CD4-positive, alpha-beta T cell (primary cell): ENCODE measurements at regions of chr9 and their contacts with region 1.

Region 1: GRCh38 chr9:15211160-15211814 is 95.7 kb downstream of the TTC39B start:
- DNase-seq: peak in 13 of 14 experiments; percentile 10 to 78 (median 44)
- ATAC-seq: peak; percentile 63
- H3K4me3 ChIP-seq: no peak overlapping the region
- H3K4me3 Mint-ChIP-seq: no peak overlapping the region
- H3K27ac ChIP-seq: no peak overlapping the region
- H3K27ac Mint-ChIP-seq: peak overlapping the region; percentile 31
- H3K4me1 ChIP-seq: no peaks in the 10 kb centered on the region
- H3K4me1 Mint-ChIP-seq: peaks cover 6% of the 10 kb centered on the region
- H3K27me3 ChIP-seq: no peaks in the 10 kb centered on the region
- H3K27me3 Mint-ChIP-seq: no peaks in the 10 kb centered on the region
- CTCF ChIP-seq: peak; percentile 95

Region 2: DNA sequence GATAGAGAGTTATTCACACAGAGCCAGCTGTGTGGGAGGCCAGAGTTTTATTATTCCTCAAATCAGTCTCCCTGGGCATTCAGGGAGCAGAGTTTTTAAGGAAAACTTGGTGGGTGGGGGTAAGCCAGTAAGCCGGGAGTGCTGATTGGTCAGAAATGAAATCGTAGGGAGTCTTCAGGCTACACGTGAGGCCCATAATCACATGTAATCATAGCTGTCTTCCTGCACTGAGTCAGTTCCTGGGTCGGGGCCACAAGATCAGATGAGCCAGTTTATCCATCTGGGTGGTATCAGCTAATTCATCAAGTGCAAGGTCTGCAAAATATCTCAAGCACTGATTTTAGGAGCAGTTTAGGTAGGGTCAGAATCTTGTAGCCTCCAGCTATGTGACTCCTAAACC is 106.5 kb after region 1 on chr9:
- CTCF ChIA-PET with region 1: no interaction called
- POLR2A ChIA-PET with region 1: no interaction called
- intact Hi-C with region 1: loop called in 1 of 2 experiments (anchors 1 kb)
- DNase-seq: no peak
- ATAC-seq: no peak
- H3K4me3 ChIP-seq: no peak overlapping the region
- H3K4me3 Mint-ChIP-seq: no peak overlapping the region
- H3K27ac ChIP-seq: no peak overlapping the region
- H3K27ac Mint-ChIP-seq: no peak overlapping the region
- H3K4me1 ChIP-seq: no peaks in the 10 kb centered on the region
- H3K4me1 Mint-ChIP-seq: no peaks in the 10 kb centered on the region
- H3K27me3 ChIP-seq: no peaks in the 10 kb centered on the region
- H3K27me3 Mint-ChIP-seq: no peaks in the 10 kb centered on the region
- CTCF ChIP-seq: no peak

Region 3: DNA sequence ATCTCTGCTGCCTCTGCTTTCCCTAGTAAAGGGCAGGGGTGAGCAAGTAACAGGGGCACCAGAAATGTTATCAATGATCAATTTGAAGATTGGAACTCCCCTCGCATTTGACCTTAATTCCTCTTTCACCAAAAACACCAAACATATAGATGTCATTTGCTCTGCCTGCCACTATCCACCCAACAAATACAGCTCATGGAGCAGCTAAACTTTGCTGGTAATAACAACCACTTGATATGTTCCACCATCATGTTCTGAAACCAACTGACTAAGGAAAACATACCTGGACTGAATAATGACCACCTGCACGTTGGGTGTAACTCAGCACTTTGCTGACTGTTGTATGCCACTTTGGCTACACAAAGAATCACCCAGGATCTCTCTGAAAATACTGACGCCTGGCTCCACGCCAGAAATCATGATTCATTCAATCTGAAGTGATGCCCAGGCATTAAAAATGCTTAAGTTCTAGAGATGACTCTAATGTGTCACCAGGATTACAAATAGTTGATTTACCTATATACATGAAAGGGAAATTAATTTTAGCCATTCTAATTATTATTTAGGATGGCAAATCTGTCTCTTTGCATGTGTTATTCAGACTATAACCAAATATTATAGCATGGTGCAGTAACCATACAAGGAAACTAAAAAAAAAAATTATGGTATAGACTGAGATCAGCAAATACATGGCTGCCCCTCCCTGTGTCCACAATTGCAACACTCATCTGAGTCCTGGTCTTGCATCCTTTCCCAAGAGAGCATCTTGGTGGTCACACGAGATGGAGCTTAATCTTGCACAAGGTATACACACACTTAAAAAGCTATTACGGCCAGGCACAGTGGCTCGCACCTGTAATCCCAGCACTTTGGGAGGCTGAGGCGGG is 138.8 kb after region 1 on chr9:
- CTCF ChIA-PET with region 1: no interaction called
- POLR2A ChIA-PET with region 1: no interaction called
- intact Hi-C with region 1: loop called in 1 of 2 experiments (anchors 5 kb)
- DNase-seq: peak in 6 of 14 experiments; percentile 18 to 55 (median 23)
- ATAC-seq: no peak
- H3K4me3 ChIP-seq: no peak overlapping the region
- H3K4me3 Mint-ChIP-seq: no peak overlapping the region
- H3K27ac ChIP-seq: no peak overlapping the region
- H3K27ac Mint-ChIP-seq: no peak overlapping the region
- H3K4me1 ChIP-seq: peaks cover 11% of the 10 kb centered on the region
- H3K4me1 Mint-ChIP-seq: peaks cover 16% of the 10 kb centered on the region
- H3K27me3 ChIP-seq: no peaks in the 10 kb centered on the region
- H3K27me3 Mint-ChIP-seq: no peaks in the 10 kb centered on the region
- CTCF ChIP-seq: no peak

Region 4: DNA sequence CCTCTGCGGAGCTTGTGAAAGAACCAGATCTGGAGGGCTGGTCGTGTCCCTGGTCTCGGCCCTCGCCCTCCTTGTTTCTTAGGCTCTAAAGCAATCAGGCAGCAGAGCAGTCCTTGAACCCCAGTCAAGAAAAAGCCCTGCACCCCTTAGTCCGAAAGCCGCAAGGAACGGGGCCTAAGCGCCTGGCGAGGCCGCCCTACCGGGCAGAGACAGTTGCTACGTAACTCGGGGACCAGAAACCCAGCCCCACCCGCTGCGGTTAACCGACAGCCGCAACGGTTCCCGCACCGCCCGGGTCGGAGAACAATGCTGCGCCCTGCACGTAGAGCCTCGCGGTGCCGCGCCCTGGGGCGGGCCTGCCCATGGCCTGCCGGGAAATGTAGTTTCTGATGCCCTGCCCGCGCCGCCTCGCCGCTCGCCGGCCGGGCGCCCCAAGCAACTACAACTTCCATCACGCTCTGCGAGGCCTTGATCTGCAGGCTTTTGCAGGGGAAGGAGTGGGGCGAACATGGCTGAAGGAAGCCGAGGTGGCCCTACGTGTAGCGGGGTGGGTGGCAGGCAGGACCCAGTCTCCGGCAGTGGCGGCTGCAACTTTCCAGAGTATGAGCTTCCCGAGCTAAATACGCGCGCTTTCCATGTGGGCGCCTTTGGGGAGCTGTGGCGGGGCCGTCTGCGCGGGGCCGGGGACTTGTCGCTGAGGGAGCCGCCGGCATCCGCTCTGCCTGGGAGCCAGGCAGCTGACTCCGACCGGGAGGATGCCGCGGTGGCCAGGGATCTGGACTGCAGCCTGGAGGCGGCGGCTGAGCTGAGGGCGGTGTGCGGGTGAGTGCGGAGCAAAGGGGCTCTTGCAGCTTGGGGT is 211.3 kb after region 1 on chr9 and contains the start of gene SNAPC3:
- CTCF ChIA-PET with region 1: no interaction called
- POLR2A ChIA-PET with region 1: interaction called, 3 read pairs
- intact Hi-C with region 1: loop called (anchors 1 to 2 kb)
- DNase-seq: peak; percentile 82 to 96 (median 90)
- ATAC-seq: peak; percentile 97
- H3K4me3 ChIP-seq: peak within 1 kb of the TSS; percentile 89
- H3K4me3 Mint-ChIP-seq: peak within 1 kb of the TSS; percentile 96
- H3K27ac ChIP-seq: peak within 1 kb of the TSS; percentile 70 to 82
- H3K27ac Mint-ChIP-seq: peak within 1 kb of the TSS; percentile 96
- H3K4me1 ChIP-seq: peaks cover 21% of the 10 kb centered on the region
- H3K4me1 Mint-ChIP-seq: peaks cover 51% of the 10 kb centered on the region
- H3K27me3 ChIP-seq: no peaks in the 10 kb centered on the region
- H3K27me3 Mint-ChIP-seq: no peaks in the 10 kb centered on the region
- CTCF ChIP-seq: no peak
- total RNA-seq, gene SNAPC3: 3.3 to 4.7 TPM

Region 5: GRCh38 chr9:15529566-15530324 is 318.5 kb after region 1 on chr9:
- CTCF ChIA-PET with region 1: no interaction called
- POLR2A ChIA-PET with region 1: no interaction called
- intact Hi-C with region 1: loop called in 1 of 2 experiments (anchors 1 kb)
- DNase-seq: no peak
- ATAC-seq: no peak
- H3K4me3 ChIP-seq: no peak overlapping the region
- H3K4me3 Mint-ChIP-seq: no peak overlapping the region
- H3K27ac ChIP-seq: no peak overlapping the region
- H3K27ac Mint-ChIP-seq: no peak overlapping the region
- H3K4me1 ChIP-seq: peaks cover 4% of the 10 kb centered on the region
- H3K4me1 Mint-ChIP-seq: peaks cover 18% of the 10 kb centered on the region
- H3K27me3 ChIP-seq: no peaks in the 10 kb centered on the region
- H3K27me3 Mint-ChIP-seq: no peaks in the 10 kb centered on the region
- CTCF ChIP-seq: no peak